Calu3 (cell line): ENCODE measurements at regions of chr17 and their contacts with region 1.

Region 1: DNA sequence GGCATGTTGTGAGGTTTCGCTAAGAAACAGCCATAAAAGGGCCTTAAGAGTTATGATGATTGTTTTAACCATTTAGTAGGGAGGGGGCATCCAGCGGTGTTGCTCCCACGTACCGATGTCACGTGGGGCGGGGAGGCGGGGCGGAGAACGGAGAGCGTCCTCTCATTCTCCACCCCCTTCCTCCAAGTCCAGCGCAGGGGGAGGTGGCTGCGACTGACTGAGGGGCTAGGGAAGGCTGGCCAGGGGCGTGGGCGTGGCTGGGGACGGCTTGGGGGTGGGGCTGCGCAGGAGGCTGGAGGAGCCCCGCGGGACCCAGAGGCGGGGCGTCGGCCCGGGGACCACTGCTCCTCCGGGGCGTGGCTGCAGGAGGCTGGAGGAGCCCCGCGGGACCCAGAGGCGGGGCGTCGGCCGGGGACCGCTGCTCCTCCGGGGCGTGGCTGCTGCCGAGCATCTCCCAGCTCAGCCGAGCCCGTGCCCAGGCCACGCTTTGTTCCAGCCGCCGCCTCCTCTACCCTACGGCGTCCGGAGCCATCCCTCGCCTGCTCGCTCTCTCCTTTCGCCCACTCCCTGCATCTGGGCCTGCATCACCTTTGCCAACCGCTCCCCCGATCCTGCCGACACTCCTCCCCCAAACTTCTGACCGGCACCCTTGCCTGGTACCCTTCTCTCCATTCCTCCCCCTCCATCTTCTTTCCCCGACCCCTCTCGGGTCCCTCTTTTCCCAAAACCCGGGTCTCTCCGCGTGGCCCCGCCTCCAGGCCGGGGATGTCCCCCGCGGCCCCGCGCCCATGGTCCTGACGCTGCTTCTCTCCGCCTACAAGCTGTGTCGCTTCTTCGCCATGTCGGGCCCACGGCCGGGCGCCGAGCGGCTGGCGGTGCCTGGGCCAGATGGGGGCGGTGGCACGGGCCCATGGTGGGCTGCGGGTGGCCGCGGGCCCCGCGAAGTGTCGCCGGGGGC is at the start of gene SARM1:
- DNase-seq: peak; percentile 59
- H3K4me3 Mint-ChIP-seq: peak within 1 kb of the TSS; percentile 65
- H3K27ac Mint-ChIP-seq: no peak within 1 kb of the TSS
- H3K4me1 Mint-ChIP-seq: peaks cover 14% of the 10 kb centered on the region
- H3K27me3 Mint-ChIP-seq: peaks cover 12% of the 10 kb centered on the region
- CTCF ChIP-seq: no peak
- total RNA-seq, gene SARM1: 7.1 and 8.1 TPM in 2 replicates

Region 2: DNA sequence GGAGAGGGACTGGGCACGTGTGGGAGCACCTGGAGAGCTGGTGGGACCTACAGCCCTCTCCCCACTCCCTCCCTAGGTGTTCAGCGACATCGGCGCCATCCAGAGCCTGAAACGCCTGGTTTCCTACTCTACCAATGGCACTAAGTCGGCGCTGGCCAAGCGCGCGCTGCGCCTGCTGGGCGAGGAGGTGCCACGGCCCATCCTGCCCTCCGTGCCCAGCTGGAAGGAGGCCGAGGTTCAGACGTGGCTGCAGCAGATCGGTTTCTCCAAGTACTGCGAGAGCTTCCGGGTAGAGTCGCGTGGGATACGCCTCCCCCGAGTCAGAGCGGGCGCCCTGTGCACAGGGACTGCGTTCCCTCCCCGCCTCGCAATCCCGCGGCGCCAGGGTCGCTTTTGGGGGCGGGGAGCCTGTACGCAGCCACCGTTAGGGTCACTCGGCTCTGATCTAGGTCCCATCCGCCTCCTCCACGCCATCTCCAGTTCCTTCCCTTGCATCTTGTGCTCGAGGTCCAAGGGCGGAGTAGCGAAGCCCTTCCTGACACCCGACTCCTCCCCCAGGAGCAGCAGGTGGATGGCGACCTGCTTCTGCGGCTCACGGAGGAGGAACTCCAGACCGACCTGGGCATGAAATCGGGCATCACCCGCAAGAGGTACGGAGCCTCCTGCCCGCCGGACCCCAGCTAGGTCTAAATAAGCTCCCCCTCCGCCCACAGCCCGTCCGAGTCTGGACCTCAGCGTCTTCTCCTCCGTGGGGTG is 12.9 kb after region 1 on chr17:
- CTCF ChIA-PET with region 1: interaction called, 3 read pairs
- intact Hi-C with region 1: loop called (anchors 1 kb)
- DNase-seq: peak; percentile 61
- H3K4me3 Mint-ChIP-seq: peak overlapping the region; percentile 84
- H3K27ac Mint-ChIP-seq: no peak overlapping the region
- H3K4me1 Mint-ChIP-seq: peaks cover 23% of the 10 kb centered on the region
- H3K27me3 Mint-ChIP-seq: peaks cover 49% of the 10 kb centered on the region
- CTCF ChIP-seq: no peak

Region 3: GRCh38 chr17:28416703-28417311 is 45.3 kb after region 1 on chr17:
- CTCF ChIA-PET with region 1: no interaction called
- intact Hi-C with region 1: loop called (anchors 5 kb)
- DNase-seq: peak; percentile 60
- H3K4me3 Mint-ChIP-seq: no peak overlapping the region
- H3K27ac Mint-ChIP-seq: no peak overlapping the region
- H3K4me1 Mint-ChIP-seq: no peaks in the 10 kb centered on the region
- H3K27me3 Mint-ChIP-seq: peaks cover 32% of the 10 kb centered on the region
- CTCF ChIP-seq: peak; percentile 55